ENCODE measurements at regions of chr5 and their contacts with region 1.

Region 1: GRCh38 chr5:75681125-75681830 is 36.0 kb downstream of the POC5 start:
- DNase-seq: peak; percentile 50
- H3K4me3 ChIP-seq: no peak overlapping the region
- H3K27ac ChIP-seq: peak overlapping the region; percentile 52
- H3K4me1 ChIP-seq: peaks cover 28% of the 10 kb centered on the region
- H3K27me3 ChIP-seq: no peaks in the 10 kb centered on the region
- CTCF ChIP-seq: peak; percentile 8 to 41
- POLR2A ChIP-seq: no peak

Region 2: DNA sequence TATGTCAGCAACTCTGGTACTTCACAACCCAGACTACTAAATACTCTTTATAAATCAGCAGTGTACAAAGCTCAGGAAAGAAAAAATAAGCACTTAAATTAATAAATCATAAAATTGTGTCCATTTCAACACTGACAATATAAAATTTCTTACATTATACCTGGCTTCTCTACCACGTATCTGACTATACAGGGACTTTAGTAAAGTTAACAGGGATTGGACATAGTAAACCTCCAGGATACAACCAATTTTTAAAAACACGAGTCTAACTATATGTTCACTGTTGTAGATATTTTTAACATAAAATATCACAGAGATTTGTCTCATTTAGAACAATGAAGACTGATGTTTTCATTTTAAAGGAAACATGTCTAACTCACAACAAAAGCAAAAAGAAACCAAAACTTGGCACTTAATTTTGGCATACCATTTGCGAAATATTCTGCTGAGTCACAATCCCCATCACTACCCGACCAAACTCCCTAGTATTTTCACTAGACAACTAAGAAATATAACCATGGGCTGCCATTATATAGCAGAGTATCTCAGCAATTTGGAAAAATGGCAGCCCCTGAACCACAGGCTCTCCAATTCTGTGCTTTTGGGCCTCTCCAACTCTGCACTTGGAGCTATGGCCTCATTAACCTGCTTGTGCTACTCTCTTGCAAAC is 829.5 kb before region 1 on chr5:
- CTCF ChIA-PET with region 1: no interaction called
- POLR2A ChIA-PET with region 1: no interaction called
- dilution Hi-C with region 1: no loop called
- intact Hi-C with region 1: no loop called
- DNase-seq: no peak
- H3K4me3 ChIP-seq: no peak overlapping the region
- H3K27ac ChIP-seq: no peak overlapping the region
- H3K4me1 ChIP-seq: no peaks in the 10 kb centered on the region
- H3K27me3 ChIP-seq: no peaks in the 10 kb centered on the region
- CTCF ChIP-seq: no peak
- POLR2A ChIP-seq: no peak

Region 3: DNA sequence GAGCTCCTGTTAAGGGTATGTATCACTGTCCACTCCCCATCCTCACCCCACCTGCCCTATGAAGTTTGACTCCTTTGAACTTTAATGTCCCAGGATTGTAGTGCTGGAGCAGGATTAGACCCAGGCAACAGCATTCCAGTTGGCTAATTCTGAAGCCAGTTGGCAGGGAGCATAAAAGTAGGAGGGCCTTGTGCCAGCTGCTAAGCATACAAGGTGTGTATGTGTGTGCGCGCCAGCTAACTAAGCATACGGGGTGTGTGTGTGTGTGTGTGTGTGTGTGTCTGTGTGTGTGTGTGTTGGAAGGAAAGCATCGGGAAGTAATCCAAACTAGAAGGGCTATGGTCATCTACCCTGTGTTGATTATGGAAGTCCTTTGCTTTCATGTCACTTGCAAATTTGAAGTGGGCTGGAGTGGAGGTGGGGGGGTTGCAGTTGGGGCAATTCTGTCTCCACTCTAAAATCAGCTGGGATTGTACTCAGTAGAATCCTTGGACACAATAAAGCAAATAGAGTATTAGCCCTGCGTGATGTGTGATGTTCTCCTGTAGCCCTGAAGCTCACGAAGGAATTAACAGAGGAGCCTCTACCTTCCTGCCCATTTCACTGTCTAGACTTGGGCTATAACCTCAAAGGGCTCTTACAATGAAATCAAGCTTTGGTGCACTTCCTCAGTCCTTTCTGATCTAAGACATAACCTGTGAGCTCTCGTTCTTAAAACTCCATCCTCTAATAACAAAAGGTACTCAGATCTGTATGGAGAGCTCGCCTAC is 317.4 kb before region 1 on chr5:
- CTCF ChIA-PET with region 1: interaction called, 11 read pairs
- POLR2A ChIA-PET with region 1: no interaction called
- dilution Hi-C with region 1: no loop called
- intact Hi-C with region 1: loop called (anchors 2 kb)
- DNase-seq: no peak
- H3K4me3 ChIP-seq: no peak overlapping the region
- H3K27ac ChIP-seq: no peak overlapping the region
- H3K4me1 ChIP-seq: peaks cover 12% of the 10 kb centered on the region
- H3K27me3 ChIP-seq: no peaks in the 10 kb centered on the region
- CTCF ChIP-seq: no peak
- POLR2A ChIP-seq: no peak

Region 4: GRCh38 chr5:75566710-75567309 is 114.5 kb before region 1 on chr5:
- CTCF ChIA-PET with region 1: interaction called, 22 read pairs
- POLR2A ChIA-PET with region 1: no interaction called
- dilution Hi-C with region 1: no loop called
- intact Hi-C with region 1: no loop called
- DNase-seq: peak; percentile 96
- H3K4me3 ChIP-seq: peak overlapping the region in 2 of 3 experiments; percentile 10 to 35
- H3K27ac ChIP-seq: peak overlapping the region; percentile 90
- H3K4me1 ChIP-seq: peaks cover 32% of the 10 kb centered on the region
- H3K27me3 ChIP-seq: no peaks in the 10 kb centered on the region
- CTCF ChIP-seq: no peak
- POLR2A ChIP-seq: no peak

Region 5: DNA sequence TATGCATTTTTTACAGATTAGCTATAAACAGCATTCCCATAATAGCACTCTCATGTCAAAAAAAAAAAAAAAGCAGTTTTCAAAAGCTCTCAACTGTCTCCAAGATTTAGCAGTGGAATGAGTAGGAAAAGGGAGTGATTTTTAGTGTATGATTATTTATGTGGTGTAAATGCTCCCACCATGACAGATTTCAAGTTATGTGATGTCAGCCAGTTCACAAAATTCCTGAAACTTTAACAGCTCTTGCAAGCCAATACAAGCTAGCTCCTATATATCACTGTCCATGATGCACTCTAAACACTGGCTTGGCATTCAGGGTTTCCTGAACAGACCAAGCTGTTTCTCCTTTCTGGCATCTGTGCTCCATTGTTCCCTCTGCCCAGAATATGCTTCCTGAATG is 77.9 kb before region 1 on chr5:
- CTCF ChIA-PET with region 1: interaction called, 11 read pairs
- POLR2A ChIA-PET with region 1: no interaction called
- dilution Hi-C with region 1: no loop called
- intact Hi-C with region 1: loop called (anchors 5 kb)
- DNase-seq: peak; percentile 66
- H3K4me3 ChIP-seq: no peak overlapping the region
- H3K27ac ChIP-seq: no peak overlapping the region
- H3K4me1 ChIP-seq: peaks cover 4% of the 10 kb centered on the region
- H3K27me3 ChIP-seq: no peaks in the 10 kb centered on the region
- CTCF ChIP-seq: no peak
- POLR2A ChIP-seq: no peak

Region 6: GRCh38 chr5:75656311-75657003 is 24.8 kb before region 1 on chr5:
- CTCF ChIA-PET with region 1: interaction called, 15 read pairs
- POLR2A ChIA-PET with region 1: no interaction called
- dilution Hi-C with region 1: no loop called
- intact Hi-C with region 1: no loop called
- DNase-seq: peak; percentile 42
- H3K4me3 ChIP-seq: peak overlapping the region; percentile 31 to 76 (median 67)
- H3K27ac ChIP-seq: peak overlapping the region; percentile 46
- H3K4me1 ChIP-seq: no peaks in the 10 kb centered on the region
- H3K27me3 ChIP-seq: no peaks in the 10 kb centered on the region
- CTCF ChIP-seq: no peak
- POLR2A ChIP-seq: no peak

Region 7: DNA sequence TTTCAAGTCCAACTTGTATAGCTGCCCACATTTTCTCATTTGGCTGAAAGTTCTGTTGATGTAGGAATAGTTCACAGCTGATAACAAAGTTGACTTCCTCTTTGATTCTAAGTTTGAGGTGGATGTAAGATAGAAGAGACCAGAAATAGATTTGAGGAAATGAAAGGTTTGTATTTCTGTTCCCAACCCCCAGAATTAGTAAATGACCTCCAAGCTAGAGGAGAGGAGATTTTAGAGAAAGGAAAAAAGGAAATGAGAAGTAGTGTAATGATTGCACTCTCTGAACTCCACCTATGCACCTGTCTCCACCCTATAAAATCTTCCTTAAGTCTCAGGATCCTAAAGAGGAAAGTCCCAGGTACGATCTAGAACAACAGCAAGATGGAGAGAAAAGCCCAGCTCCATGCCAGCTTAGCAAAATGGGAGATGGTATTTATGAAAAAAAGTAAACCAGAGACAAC is 166.3 kb after region 1 on chr5:
- CTCF ChIA-PET with region 1: no interaction called
- POLR2A ChIA-PET with region 1: no interaction called
- dilution Hi-C with region 1: no loop called
- intact Hi-C with region 1: no loop called
- DNase-seq: no peak
- H3K4me3 ChIP-seq: no peak overlapping the region
- H3K27ac ChIP-seq: no peak overlapping the region
- H3K4me1 ChIP-seq: no peaks in the 10 kb centered on the region
- H3K27me3 ChIP-seq: no peaks in the 10 kb centered on the region
- CTCF ChIP-seq: no peak
- POLR2A ChIP-seq: no peak

Region 8: DNA sequence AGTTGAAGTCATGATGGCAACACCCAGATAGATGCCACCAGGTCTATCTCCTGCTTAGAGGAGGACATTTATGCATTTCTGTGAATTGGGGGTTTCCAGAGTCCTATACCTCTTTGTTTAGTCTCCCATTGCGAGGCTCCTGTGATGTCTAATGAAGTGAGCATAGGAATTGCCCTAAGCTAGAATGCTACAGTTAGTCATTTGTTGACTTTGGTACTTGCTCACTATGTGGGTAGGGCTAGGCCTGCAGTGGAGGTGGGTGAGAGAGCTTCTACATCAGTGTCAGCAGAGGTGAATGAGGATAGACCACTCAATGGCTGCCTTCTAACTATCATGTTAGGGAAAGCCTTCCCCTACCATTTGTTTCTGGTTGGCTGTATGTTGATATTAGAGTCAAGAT is 209.3 kb after region 1 on chr5:
- CTCF ChIA-PET with region 1: no interaction called
- POLR2A ChIA-PET with region 1: no interaction called
- dilution Hi-C with region 1: no loop called
- intact Hi-C with region 1: no loop called
- DNase-seq: no peak
- H3K4me3 ChIP-seq: no peak overlapping the region
- H3K27ac ChIP-seq: no peak overlapping the region
- H3K4me1 ChIP-seq: no peaks in the 10 kb centered on the region
- H3K27me3 ChIP-seq: no peaks in the 10 kb centered on the region
- CTCF ChIP-seq: no peak
- POLR2A ChIP-seq: no peak